A549 (cell line): ENCODE measurements at regions of chr10 and their contacts with region 1.

Region 1: DNA sequence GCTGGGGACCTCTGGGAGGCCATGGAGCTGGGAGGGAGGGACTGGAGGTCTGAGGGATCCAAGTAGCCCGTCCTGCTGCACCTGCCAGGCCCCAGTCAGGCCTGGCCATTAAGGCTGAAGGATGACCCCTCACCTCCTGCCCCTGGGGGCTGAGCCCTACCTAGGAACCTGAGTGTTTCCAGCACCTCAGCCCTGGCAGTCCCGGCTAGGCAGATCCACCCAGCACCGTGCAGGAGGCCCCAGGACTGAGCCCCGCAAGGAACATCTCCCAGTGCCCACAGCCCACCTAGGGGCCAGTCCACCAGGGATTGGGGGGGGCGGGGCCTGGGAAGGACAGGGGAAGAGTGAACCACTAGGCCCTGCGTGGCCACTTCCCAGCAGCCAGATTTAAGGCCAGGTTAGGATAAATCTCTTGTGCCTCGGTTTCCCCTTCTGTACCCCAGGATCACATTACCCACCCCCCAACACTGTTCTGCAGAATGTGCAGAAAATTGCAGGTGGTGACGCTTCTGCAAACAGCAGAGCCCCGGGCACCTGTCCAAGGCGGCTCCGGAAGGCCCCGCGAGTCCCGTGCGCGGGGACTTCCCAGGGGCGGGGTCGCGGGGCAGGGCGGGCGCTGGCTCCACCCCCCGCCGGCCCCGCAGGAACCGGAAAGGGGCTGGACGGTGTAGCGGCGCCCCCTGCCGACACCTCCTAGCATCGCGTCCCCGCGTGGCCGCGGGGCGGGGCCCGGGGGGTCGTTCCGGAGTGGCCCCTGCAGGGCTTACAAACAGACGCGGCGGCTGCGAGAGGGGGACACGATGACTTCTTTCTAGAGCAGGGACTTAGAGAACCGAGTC is 55.9 kb downstream of the PWWP2B start:
- DNase-seq: peak; percentile 73 to 85
- ATAC-seq: peak; percentile 35 to 69
- H3K4me3 ChIP-seq: peak overlapping the region; percentile 5; the same call in 2 of the 3 replicates
- H3K27ac ChIP-seq: peak overlapping the region; percentile 47 to 92; a peak in 5 of 6 replicates
- H3K4me1 ChIP-seq: peaks cover 48% of the 10 kb centered on the region
- CTCF ChIP-seq: peak; percentile 97
- EP300 ChIP-seq: 0 out of 5 replicates have a peak, but pooled peaks of 1 of the 2 experiments have one; percentile 13
- POLR2A ChIP-seq: no peak
- RAD21 ChIP-seq: peak; percentile 84 to 99

Region 2: GRCh38 chr10:132387764-132388210 is 65.1 kb before region 1 on chr10:
- CTCF ChIA-PET with region 1: interaction called, 12 read pairs
- POLR2A ChIA-PET with region 1: no interaction called
- DNase-seq: peak; percentile 41 to 93
- ATAC-seq: peak; percentile 15 to 66; a peak in 3 of 6 replicates
- H3K4me3 ChIP-seq: no peak overlapping the region
- H3K27ac ChIP-seq: peak overlapping the region; percentile 51 to 74; a peak in 5 of 6 replicates
- H3K4me1 ChIP-seq: peaks cover 19% of the 10 kb centered on the region; the same call in 2 of the 3 replicates
- CTCF ChIP-seq: peak; percentile 36; the same call in 2 of the 3 replicates
- EP300 ChIP-seq: no peak
- POLR2A ChIP-seq: no peak
- RAD21 ChIP-seq: peak; percentile 71 to 78

Region 3: DNA sequence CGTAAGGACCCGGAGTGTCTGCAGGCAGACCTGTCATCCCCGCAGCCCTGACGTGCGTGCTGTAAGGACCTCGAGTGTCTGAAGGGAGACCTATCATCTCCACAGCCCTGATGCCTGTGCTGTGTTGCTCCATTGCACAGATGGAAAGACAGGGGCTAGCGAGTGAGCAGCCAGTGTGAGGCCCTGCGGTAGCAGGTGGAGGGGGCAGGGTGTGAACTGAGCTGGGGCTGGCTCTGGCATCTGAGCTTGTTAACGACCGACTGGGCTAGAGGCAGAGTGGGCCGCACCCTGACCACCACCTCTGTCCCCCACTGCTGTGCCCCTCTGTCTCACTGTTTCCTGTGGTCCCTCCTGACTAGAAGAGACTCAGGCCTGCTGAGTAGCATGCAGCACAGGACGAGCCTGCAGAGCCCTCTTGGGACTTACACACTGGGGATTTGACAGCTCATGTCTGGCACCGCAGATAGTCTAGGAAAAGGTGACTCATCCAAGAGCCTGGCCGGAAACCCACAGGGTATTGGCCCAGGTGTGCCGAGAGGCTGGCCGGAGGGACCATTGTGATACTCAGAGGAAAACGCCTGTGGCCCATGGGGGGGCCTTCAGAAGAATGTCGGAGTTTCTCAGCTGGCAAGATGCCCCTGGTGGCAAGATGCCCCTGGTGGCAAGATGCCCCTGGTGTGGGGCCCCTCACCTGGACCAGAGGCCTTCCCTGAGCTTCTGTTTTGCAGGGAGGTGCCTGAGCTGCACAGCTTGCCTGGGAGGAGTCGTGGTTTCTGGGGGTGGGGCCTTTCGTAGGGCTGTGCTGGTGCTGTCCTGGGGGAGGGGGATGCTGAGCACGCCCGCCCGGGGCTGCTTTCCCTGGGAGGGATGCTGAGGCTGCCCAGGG is 119.0 kb after region 1 on chr10:
- CTCF ChIA-PET with region 1: interaction called, 133 read pairs
- POLR2A ChIA-PET with region 1: no interaction called
- DNase-seq: peak; percentile 74 to 75
- ATAC-seq: peak; percentile 87 to 92
- H3K4me3 ChIP-seq: no peak overlapping the region
- H3K27ac ChIP-seq: peak overlapping the region; percentile 11 to 59; a peak in 4 of 6 replicates
- H3K4me1 ChIP-seq: peaks cover 42% of the 10 kb centered on the region
- CTCF ChIP-seq: no peak
- EP300 ChIP-seq: no peak
- POLR2A ChIP-seq: no peak
- RAD21 ChIP-seq: no peak

Region 4: DNA sequence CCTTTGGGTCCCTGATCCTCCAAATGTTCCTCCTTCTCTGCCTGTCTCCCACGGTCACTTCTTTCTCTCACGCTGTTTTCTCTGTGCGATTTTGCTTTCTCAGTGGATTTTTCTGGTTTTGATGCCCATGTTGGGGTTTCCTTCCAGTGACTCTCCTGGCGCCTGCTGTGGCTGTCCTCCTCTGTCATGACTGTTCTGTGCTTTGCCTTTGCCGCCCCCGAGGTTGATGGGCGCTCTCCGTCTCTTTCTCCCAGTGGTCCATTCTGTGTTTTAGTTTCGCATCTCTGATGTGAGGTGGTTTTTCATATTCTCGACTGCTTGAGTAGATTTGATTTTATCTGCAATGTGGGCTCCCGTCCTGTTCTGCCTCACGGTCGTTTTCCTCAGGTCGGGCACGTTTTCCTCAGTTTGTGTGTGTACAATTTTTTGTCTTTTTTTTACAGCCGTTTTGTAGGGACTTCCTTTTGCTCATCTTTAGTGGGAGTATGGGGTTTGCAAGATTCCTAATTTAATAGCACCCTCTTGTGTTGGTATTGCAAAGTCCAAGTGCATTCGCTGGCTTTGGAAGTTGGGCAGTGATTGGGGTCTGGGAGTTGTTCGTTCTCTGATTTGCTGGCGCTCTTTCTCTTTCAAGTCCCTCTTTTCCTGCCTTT is 184.8 kb after region 1 on chr10:
- CTCF ChIA-PET with region 1: interaction called, 134 read pairs
- POLR2A ChIA-PET with region 1: no interaction called
- DNase-seq: peak; percentile 66 to 93
- ATAC-seq: peak; percentile 83 to 94
- H3K4me3 ChIP-seq: no peak overlapping the region
- H3K27ac ChIP-seq: no peak overlapping the region
- H3K4me1 ChIP-seq: peaks cover 3% of the 10 kb centered on the region; the same call in 1 of the 3 replicates
- CTCF ChIP-seq: peak; percentile 86
- EP300 ChIP-seq: no peak
- POLR2A ChIP-seq: no peak
- RAD21 ChIP-seq: peak; percentile 95 to 96